Activated B cell treated with CpG ODN at 0.5 μM for 24 hours (primary cell): ENCODE measurements at regions of chr7 and their contacts with region 1.

Region 1: DNA sequence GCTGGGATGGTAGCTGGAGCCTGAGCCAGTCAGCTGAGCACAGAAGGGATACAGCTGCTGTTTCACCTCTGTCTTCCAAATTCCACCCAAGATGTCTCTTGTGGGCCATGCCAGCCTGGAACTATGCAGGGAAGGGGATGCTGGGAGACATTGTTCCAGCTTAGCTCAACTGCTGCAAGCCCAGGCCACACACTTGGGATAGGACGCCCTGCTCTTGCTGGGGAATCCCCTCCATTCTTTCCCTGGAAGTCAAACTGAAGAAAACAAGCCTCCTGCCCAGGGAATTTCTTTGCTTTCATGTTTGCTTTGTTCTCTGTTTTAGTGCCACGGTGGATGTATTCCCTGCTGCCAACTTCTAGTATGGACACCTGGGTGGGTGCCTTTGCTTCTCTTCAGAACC is 55.2 kb upstream of the CDK13 start:
- DNase-seq: no peak
- ATAC-seq: no peak
- H3K4me3 Mint-ChIP-seq: no peak overlapping the region
- H3K27ac Mint-ChIP-seq: no peak overlapping the region
- H3K4me1 Mint-ChIP-seq: no peaks in the 10 kb centered on the region
- H3K27me3 Mint-ChIP-seq: peaks cover 9% of the 10 kb centered on the region
- CTCF ChIP-seq: no peak

Region 2: GRCh38 chr7:39580149-39580874 is 314.6 kb before region 1 on chr7:
- CTCF ChIA-PET with region 1: interaction called, 13 read pairs
- POLR2A ChIA-PET with region 1: no interaction called
- intact Hi-C with region 1: no loop called
- DNase-seq: peak; percentile 39
- ATAC-seq: peak; percentile 97
- H3K4me3 Mint-ChIP-seq: no peak overlapping the region
- H3K27ac Mint-ChIP-seq: no peak overlapping the region
- H3K4me1 Mint-ChIP-seq: peaks cover 3% of the 10 kb centered on the region
- H3K27me3 Mint-ChIP-seq: no peaks in the 10 kb centered on the region
- CTCF ChIP-seq: no peak

Region 3: GRCh38 chr7:39883812-39884390 is 11.0 kb before region 1 on chr7:
- CTCF ChIA-PET with region 1: interaction called, 10 read pairs
- POLR2A ChIA-PET with region 1: interaction called, 3 read pairs
- intact Hi-C with region 1: no loop called
- DNase-seq: no peak
- ATAC-seq: no peak
- H3K4me3 Mint-ChIP-seq: no peak overlapping the region
- H3K27ac Mint-ChIP-seq: no peak overlapping the region
- H3K4me1 Mint-ChIP-seq: no peaks in the 10 kb centered on the region
- H3K27me3 Mint-ChIP-seq: peaks cover 5% of the 10 kb centered on the region
- CTCF ChIP-seq: no peak

Region 4: GRCh38 chr7:40047661-40048060 is 152.8 kb after region 1 on chr7:
- CTCF ChIA-PET with region 1: interaction called, 241 read pairs
- POLR2A ChIA-PET with region 1: interaction called, 3 read pairs
- intact Hi-C with region 1: loop called (anchors 1 kb)
- DNase-seq: no peak
- ATAC-seq: no peak
- H3K4me3 Mint-ChIP-seq: no peak overlapping the region
- H3K27ac Mint-ChIP-seq: no peak overlapping the region
- H3K4me1 Mint-ChIP-seq: peaks cover 1% of the 10 kb centered on the region
- H3K27me3 Mint-ChIP-seq: no peaks in the 10 kb centered on the region
- CTCF ChIP-seq: no peak

Region 5: DNA sequence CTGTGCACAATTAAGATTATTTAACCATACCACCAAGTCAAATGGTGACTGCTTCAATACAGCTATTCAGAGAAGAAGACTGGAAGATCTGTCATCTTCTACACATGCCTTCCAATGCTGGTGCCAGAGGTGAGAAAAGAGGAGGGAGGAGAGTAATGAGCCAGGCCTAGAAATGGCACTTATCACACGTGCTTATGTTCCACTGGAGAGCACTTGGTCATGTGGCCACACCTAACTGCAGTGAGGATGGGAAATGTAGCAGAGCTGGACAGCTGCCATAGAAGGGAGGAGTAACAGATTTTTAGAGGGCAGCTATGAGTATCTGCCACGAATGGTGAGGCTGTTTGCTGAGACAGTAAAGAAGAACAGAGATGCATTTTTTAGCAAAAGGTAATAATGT is 162.4 kb after region 1 on chr7:
- CTCF ChIA-PET with region 1: interaction called, 241 read pairs
- POLR2A ChIA-PET with region 1: interaction called, 3 read pairs
- intact Hi-C with region 1: loop called (anchors 1 kb)
- DNase-seq: no peak
- ATAC-seq: no peak
- H3K4me3 Mint-ChIP-seq: no peak overlapping the region
- H3K27ac Mint-ChIP-seq: peak overlapping the region; percentile 54
- H3K4me1 Mint-ChIP-seq: peaks cover 2% of the 10 kb centered on the region
- H3K27me3 Mint-ChIP-seq: no peaks in the 10 kb centered on the region
- CTCF ChIP-seq: no peak

Region 6: GRCh38 chr7:40134428-40135316 is 239.8 kb after region 1 on chr7 and contains the starts of genes MPLKIP and SUGCT:
- CTCF ChIA-PET with region 1: interaction called, 6 read pairs
- POLR2A ChIA-PET with region 1: interaction called, 4 read pairs
- intact Hi-C with region 1: loop called (anchors 1 kb)
- DNase-seq: peak; percentile 91
- ATAC-seq: peak; percentile 90
- H3K4me3 Mint-ChIP-seq: peak within 1 kb of the TSS; percentile 97
- H3K27ac Mint-ChIP-seq: peak within 1 kb of the TSS; percentile 97
- H3K4me1 Mint-ChIP-seq: peaks cover 35% of the 10 kb centered on the region
- H3K27me3 Mint-ChIP-seq: no peaks in the 10 kb centered on the region
- CTCF ChIP-seq: no peak
- total RNA-seq, gene MPLKIP: 29.9 and 35.1 TPM in 2 replicates
- total RNA-seq, gene SUGCT: 0.61 and 1.3 TPM in 2 replicates

Region 7: DNA sequence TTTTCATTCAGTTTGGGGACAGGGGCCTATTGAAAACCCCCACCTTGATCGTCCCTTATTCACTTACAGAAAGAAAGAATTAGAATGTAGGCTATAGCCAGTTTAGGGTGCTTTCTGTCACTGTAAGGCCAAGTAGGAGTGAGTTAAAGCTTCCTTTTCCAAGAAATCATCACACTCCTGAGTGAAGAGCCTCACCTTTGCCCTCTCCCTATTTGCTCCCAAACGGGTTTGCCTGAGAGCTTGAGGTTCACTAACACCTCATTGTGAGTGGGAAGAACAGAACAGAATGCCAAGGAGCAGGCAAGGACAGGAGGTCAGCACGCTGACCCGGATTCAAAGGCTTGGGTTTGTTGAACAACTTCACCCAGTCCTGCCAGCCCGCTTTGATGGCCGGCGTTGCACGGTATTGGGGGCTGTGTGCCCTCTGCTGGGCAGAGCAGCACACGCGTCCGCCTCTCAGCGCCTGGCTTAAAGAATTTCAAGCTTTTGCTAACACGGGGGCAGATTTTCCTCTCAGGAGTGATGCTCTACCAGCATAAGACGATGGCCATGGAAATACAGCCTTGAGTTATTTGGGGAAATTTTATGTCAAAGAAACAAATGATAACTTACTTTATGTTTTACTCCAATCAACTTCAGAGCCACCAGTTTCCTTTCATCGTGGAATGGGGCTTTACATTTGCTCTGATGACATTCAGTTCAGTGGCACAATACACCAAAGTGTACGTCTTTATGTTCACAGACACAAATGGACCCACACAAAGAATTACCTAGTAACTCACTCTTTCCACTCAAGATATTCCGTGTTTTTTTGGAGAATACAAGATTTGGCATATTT is 709.9 kb after region 1 on chr7:
- CTCF ChIA-PET with region 1: no interaction called
- POLR2A ChIA-PET with region 1: no interaction called
- intact Hi-C with region 1: loop called (anchors 5 kb)
- DNase-seq: no peak
- ATAC-seq: no peak
- H3K4me3 Mint-ChIP-seq: no peak overlapping the region
- H3K27ac Mint-ChIP-seq: no peak overlapping the region
- H3K4me1 Mint-ChIP-seq: no peaks in the 10 kb centered on the region
- H3K27me3 Mint-ChIP-seq: peaks cover 3% of the 10 kb centered on the region
- CTCF ChIP-seq: no peak